Activated CD8-positive, alpha-beta memory T cell treated with anti-CD3 and anti-CD28 coated beads, Interleukin-2, amount 10 ng/mL, durations not matched to agents 7 days and 5 days (primary cell): ENCODE measurements at regions of chr3 and their contacts with region 1.

Region 1: DNA sequence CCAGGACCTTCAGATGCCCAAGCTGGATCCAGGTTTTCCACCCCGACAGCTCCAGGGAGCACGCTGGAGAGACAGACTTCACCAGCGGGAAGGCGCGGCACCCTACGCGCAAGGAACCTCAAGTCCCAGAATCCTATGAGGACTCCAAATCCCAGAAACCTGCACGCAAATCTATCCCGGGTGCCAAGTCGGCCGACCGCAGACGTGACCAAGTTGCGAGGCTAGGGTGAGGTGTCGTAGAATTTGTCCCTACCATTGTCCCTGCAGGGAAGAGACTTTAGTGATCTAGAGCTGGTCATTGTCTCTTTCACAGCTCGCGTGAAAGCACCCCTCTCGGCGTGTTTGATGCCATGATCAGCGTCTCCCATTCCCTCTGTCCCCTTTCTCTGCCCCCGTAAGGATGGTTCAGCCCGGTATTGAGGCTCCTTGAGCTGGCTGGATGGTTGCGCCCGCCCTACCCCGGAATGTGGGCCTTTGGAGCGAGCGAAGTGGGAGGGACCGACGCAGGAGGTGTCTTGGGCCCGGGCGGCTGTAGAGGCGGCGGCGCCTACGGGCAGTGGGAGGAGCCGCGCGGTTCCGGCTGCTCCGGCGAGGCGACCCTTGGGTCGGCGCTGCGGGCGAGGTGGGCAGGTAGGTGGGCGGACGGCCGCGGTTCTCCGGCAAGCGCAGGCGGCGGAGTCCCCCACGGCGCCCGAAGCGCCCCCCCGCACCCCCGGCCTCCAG is at the start of gene PRKCI:
- DNase-seq: peak; percentile 93
- ATAC-seq: peak; percentile 98
- H3K4me3 Mint-ChIP-seq: peak within 1 kb of the TSS; percentile 80
- H3K27ac Mint-ChIP-seq: peak within 1 kb of the TSS; percentile 90
- H3K4me1 Mint-ChIP-seq: peaks cover 24% of the 10 kb centered on the region
- H3K27me3 Mint-ChIP-seq: no peaks in the 10 kb centered on the region
- total RNA-seq, gene PRKCI: 13.3 to 16.4 TPM

Region 2: GRCh38 chr3:170267793-170268192 is 45.7 kb after region 1 on chr3:
- CTCF ChIA-PET with region 1: no interaction called
- DNase-seq: no peak
- ATAC-seq: no peak
- H3K4me3 Mint-ChIP-seq: no peak overlapping the region
- H3K27ac Mint-ChIP-seq: no peak overlapping the region
- H3K4me1 Mint-ChIP-seq: no peaks in the 10 kb centered on the region
- H3K27me3 Mint-ChIP-seq: no peaks in the 10 kb centered on the region

Region 3: DNA sequence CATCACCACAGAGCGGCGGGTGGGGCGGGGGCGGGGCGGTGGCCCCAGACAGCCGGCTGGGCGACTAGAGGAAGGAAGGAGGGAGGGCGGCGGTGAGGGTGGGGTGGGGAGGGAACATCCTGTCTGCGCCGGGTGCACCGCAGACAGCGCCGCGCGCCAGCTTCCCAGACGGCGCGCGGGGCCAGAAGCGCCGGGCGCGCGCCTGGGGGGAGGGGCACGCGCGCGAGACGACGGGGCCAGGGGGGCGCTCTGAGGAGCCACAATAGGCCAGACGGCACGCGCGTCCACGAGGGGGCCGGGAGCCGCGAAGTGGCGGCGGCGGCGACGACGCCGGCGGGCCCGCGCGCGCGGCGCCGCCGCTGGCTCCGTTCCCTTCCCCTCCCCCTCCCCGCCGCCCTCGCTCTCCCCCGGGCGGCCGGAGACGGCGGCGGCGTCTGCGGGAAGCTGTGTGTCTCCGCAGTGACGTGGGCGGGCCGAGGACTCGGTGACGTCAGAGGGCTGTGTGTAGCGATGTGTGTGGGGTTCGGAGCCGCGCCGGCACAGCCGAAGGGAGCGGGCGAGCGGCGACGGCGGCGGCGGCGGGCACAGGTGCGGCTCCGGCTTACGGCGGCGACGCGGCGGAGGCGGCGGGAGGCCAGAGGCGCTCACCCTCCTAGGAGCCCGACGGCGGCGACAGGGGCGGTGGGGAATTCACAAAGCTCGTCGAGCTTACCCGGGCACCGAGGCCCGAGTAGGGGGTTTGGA is 135.3 kb after region 1 on chr3 and contains the start of gene SKIL:
- CTCF ChIA-PET with region 1: interaction called, 10 read pairs
- DNase-seq: peak; percentile 95
- ATAC-seq: peak; percentile 77
- H3K4me3 Mint-ChIP-seq: peak within 1 kb of the TSS; percentile 86
- H3K27ac Mint-ChIP-seq: peak within 1 kb of the TSS; percentile 96
- H3K4me1 Mint-ChIP-seq: peaks cover 37% of the 10 kb centered on the region
- H3K27me3 Mint-ChIP-seq: no peaks in the 10 kb centered on the region
- total RNA-seq, gene SKIL: 13.9 to 20.9 TPM